Activated CD4-positive, alpha-beta memory T cell treated with anti-CD3 and anti-CD28 coated beads, Interleukin-2, amount 10 ng/mL, durations not matched to agents 7 days and 5 days (primary cell): ENCODE measurements at regions of chr16 and their contacts with region 1.

Region 1: DNA sequence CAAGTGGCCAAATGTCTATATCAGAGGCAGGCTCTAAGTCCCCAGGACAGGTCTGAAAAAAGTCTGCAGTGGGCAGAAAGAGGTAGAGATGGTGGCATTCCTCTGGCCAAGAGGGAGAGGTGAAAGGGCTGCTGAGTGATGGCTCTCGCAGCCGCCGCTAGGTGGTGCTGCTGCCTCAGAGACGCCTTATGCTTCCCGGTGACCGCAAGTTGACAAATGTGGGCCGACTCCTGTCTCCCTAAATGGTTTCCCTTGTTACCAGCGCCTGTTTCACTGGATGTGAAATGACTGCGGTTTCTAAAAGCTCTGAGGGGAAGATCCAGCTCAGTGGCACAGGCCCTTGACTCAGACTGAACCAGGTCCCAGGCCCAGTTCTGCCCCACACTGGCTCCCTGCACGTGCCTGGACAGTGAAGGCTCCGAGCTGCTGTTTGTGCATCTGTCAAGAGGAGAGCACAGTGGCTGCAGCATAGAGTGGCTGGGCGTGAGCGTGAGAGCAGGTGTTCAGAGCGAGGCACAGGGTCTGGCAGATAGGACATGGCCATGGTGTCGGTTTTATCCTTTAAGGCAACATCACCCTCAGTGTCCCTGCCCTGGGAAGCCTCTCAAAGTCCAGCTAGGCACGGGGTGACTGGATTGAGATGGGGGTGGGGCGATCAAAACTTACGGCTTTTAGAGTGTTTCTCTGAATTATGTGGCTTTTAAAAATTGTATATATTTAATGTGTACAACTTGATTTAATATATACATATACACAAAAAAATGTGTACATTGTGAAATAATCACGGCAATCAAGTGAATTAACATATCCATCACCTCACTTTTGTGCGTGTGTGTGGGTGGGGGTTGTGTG is 19.9 kb downstream of the CLEC16A start:
- DNase-seq: peak; percentile 87
- H3K4me3 Mint-ChIP-seq: peak overlapping the region; percentile 57
- H3K27ac Mint-ChIP-seq: peak overlapping the region; percentile 95
- H3K4me1 Mint-ChIP-seq: peaks cover 82% of the 10 kb centered on the region
- H3K27me3 Mint-ChIP-seq: no peaks in the 10 kb centered on the region

Region 2: DNA sequence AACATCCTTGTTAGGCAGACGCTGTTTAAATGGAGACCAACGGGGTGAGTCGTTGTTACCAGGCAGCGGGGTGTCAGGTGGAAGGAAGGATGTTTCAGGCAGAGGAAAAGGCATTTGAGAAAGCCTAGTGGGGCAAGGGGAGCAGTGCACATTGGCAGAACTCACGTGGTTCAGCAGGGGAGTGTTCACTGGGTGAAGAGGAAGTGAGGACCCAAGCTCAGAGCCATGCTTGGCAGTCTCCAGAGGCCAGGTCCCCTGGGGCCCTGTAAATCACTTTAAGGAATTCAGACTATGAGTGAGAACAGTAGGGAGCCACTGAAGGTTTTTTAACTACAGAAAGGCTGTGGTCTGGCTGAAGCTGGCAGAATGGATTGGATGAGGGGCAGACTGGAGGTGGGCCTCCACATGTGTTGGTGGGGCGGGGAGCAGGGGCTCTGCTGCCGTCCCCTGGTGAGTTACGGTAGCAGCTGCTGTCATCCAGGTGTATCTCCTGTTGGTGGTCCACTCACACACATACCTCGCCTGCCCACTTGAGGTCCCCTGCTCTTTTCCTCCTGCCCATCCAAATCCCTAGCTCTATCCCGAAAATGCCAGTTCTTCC is 14.8 kb before region 1 on chr16:
- CTCF ChIA-PET with region 1: interaction called, 34 read pairs
- POLR2A ChIA-PET with region 1: interaction called, 11 read pairs
- DNase-seq: peak; percentile 66
- H3K4me3 Mint-ChIP-seq: no peak overlapping the region
- H3K27ac Mint-ChIP-seq: peak overlapping the region; percentile 16
- H3K4me1 Mint-ChIP-seq: peaks cover 62% of the 10 kb centered on the region
- H3K27me3 Mint-ChIP-seq: no peaks in the 10 kb centered on the region

Region 3: GRCh38 chr16:10981697-10982216 is 17.5 kb after region 1 on chr16:
- CTCF ChIA-PET with region 1: interaction called, 22 read pairs
- POLR2A ChIA-PET with region 1: interaction called, 11 read pairs
- DNase-seq: peak; percentile 77
- H3K4me3 Mint-ChIP-seq: peak overlapping the region; percentile 60
- H3K27ac Mint-ChIP-seq: peak overlapping the region; percentile 87
- H3K4me1 Mint-ChIP-seq: peaks cover 90% of the 10 kb centered on the region
- H3K27me3 Mint-ChIP-seq: no peaks in the 10 kb centered on the region

Region 4: DNA sequence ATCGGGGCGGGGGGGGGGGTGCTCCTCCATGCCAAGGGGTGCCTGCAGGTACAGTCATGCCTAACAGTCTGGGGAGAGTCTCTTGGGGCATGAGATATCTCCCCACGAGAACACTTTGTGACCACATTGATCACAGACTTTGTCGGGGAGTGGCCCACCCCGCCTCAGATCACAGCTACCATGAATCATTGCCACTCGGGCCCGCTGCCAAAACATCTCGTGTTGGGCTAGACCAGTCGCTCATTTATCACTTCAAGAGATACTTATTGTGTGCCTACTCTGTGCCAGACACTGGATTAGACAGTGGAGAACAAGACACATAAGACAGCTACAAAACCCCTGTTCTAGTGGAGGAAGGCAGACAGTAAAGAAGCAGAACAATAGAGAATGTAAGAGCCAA is 52.7 kb after region 1 on chr16:
- CTCF ChIA-PET with region 1: no interaction called
- POLR2A ChIA-PET with region 1: no interaction called
- DNase-seq: no peak
- H3K4me3 Mint-ChIP-seq: no peak overlapping the region
- H3K27ac Mint-ChIP-seq: no peak overlapping the region
- H3K4me1 Mint-ChIP-seq: peaks cover 12% of the 10 kb centered on the region
- H3K27me3 Mint-ChIP-seq: no peaks in the 10 kb centered on the region

Region 5: DNA sequence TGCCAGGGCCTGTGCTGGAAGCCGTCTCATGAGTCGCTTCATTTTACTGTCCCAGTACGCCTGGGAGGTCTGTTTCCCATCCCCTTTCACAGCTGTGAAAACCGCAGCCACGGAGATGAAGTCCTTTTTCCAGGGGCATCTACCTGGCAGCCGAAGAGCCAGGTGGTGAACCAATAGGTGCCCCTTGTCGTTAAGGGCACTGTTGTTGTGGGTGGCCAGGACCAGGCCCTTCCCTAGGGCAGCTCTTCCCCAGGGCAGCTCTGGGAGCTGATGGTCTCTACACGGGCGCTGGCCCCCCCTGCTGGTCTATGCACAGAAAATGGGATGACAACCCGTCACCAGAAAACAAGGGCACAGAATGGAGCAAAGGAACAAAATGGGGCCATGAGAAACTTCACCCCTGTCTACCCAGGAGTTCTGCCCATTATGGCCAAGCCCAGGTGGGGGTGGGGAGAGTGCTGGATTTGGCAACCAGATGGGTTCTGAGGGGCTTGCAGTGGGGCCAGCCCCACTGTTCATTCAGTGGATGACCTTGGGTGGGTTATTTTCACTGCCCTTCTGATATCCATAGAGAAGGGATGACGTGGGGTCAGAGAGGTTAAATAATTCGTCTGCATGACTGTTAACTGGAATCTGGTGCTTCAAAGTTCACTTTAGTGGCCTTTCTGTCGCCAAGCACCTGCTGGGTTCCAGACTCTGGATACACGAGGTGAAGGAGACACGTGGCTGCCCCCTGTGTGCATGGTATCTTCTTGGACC is 392.5 kb after region 1 on chr16:
- CTCF ChIA-PET with region 1: interaction called, 28 read pairs
- POLR2A ChIA-PET with region 1: interaction called, 24 read pairs
- DNase-seq: peak; percentile 63
- H3K4me3 Mint-ChIP-seq: no peak overlapping the region
- H3K27ac Mint-ChIP-seq: no peak overlapping the region
- H3K4me1 Mint-ChIP-seq: peaks cover 60% of the 10 kb centered on the region
- H3K27me3 Mint-ChIP-seq: peaks cover 56% of the 10 kb centered on the region

Region 6: GRCh38 chr16:11535471-11535870 is 571.2 kb after region 1 on chr16:
- CTCF ChIA-PET with region 1: interaction called, 25 read pairs
- POLR2A ChIA-PET with region 1: no interaction called
- DNase-seq: no peak
- H3K4me3 Mint-ChIP-seq: no peak overlapping the region
- H3K27ac Mint-ChIP-seq: no peak overlapping the region
- H3K4me1 Mint-ChIP-seq: peaks cover 3% of the 10 kb centered on the region
- H3K27me3 Mint-ChIP-seq: peaks cover 6% of the 10 kb centered on the region